Activated CD4-positive, alpha-beta T cell treated with anti-CD3 and anti-CD28 coated beads, Interleukin-2, amount 10 ng/mL, durations not matched to agents 24 days and 14 days (primary cell): ENCODE measurements at regions of chr18 and their contacts with region 1.

Region 1: DNA sequence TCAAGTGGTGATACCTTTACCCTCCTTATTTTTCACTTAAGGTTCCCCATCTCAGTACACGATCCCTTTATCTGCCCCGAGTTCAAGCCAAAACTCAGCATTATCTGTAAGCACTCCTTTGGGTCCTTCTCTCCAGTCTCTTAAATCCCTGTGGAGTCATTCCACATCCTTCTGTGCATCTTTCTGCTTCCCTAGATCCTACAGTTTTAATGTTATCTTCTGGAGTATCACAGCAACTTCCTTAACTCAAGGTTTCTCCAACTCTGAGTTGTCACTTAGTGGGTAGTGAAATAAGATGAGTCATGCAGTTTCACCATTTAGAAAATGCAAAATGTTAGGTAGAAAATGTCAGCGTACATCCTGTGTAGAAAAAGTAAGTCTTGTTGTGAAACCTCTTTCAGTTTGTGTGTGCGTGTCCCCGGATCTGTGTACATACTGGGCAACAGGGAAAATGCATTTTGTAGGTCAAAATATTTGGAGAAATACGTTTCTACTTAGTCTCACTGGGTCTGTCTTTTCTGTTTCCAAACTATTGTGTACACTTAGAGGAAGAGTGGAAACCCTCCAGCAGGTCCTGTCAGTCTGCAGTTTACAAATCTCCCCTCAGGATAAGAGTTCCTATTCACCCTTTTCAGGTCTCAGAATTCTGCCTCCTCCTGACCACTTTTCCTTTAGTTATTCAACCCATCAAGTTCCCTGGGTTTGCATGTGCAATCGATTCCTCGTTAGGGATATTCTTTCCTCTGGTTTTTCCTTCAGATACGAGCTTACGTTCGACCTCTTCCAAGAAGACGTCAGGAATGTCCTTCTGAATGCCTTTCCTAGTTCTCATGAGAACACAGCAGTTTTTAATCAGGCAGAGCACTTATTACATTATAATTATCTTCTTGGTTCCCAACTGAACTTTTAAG is 154.8 kb downstream of the TGIF1 start:
- DNase-seq: peak; percentile 82
- H3K4me3 Mint-ChIP-seq: no peak overlapping the region
- H3K27ac Mint-ChIP-seq: no peak overlapping the region
- H3K4me1 Mint-ChIP-seq: peaks cover 20% of the 10 kb centered on the region
- H3K27me3 Mint-ChIP-seq: no peaks in the 10 kb centered on the region

Region 2: GRCh38 chr18:2641638-2642037 is 963.1 kb before region 1 on chr18:
- intact Hi-C with region 1: loop called (anchors 10 kb)
- DNase-seq: peak; percentile 75
- H3K4me3 Mint-ChIP-seq: peak overlapping the region; percentile 70
- H3K27ac Mint-ChIP-seq: peak overlapping the region; percentile 87
- H3K4me1 Mint-ChIP-seq: peaks cover 43% of the 10 kb centered on the region
- H3K27me3 Mint-ChIP-seq: no peaks in the 10 kb centered on the region

Region 3: GRCh38 chr18:3151399-3152264 is 453.1 kb before region 1 on chr18:
- intact Hi-C with region 1: no loop called
- DNase-seq: peak; percentile 64
- H3K4me3 Mint-ChIP-seq: no peak overlapping the region
- H3K27ac Mint-ChIP-seq: no peak overlapping the region
- H3K4me1 Mint-ChIP-seq: peaks cover 6% of the 10 kb centered on the region
- H3K27me3 Mint-ChIP-seq: peaks cover 6% of the 10 kb centered on the region

Region 4: DNA sequence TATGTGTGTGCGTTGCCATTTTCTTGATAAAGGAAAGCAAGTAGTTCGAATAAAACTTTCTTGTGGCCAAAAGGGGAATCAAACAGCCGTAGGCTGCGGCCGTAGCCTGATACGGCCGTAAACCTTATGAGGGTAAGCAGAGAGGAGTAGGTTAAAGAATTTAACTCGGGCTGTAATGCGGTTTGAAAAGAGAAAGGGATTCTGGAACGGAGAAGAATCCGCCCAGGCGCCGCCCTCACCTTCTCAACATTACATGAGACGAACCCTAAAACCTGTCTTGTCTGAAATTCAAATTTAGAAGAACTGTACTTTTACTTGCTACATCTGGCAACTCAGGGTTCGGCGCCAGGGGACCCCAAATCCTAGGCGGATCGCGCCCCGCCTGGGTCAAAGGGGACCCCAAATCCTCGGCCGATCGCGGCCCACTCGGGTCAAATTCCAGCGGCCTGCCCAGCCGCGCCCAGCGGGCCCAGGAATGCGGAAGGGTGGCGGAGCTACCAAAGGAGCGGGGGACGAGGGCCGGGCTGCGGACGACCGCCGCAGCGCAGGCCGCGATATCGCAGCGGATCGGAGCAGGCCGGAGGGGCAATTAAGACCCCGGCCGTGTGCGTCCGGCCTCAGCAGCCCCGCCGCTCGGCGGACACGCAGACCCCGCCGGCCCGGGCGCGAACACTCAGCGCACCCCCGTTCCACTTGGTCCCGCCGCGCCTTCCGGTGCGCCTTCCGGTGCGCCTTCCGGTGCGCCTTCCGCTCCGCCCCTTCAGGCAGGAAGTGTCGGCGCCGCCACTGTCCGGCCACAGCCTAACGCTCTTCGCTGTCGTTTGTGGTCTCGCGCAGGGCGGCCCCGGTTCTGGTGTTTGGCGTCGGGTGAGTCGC is 343.1 kb before region 1 on chr18 and contains the start of gene MYL12B:
- intact Hi-C with region 1: loop called (anchors 2 kb)
- DNase-seq: peak; percentile 94
- H3K4me3 Mint-ChIP-seq: peak within 1 kb of the TSS; percentile 89
- H3K27ac Mint-ChIP-seq: peak within 1 kb of the TSS; percentile 98
- H3K4me1 Mint-ChIP-seq: peaks cover 68% of the 10 kb centered on the region
- H3K27me3 Mint-ChIP-seq: no peaks in the 10 kb centered on the region
- total RNA-seq, gene MYL12B: 239 and 245 TPM in 2 replicates

Region 5: DNA sequence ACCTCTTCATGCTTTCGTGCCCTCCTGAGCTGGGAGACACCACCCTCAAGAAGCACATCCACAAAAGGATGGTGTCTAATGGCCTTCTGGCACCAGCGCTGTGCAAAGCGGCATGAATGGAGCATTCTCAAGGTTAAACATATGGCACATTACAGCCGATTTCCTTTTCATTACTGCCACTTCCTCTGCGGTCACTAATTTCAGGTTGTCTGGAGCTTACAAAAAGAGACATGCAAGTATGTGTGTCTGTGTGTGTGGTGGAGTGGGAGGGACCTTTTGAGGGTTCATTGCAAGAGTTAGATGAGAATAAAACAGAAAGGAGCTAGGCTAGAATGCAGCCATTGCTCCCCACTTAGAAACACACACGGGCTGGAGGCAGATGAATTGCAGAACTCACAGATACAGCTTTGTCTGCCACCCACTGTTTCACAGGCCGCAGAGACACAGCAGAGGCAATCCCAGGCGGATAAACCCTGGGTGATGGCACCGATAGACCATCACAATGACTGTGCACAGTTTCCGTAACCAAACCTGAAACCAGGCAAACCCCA is 78.8 kb before region 1 on chr18:
- intact Hi-C with region 1: no loop called
- DNase-seq: peak; percentile 79
- H3K4me3 Mint-ChIP-seq: peak overlapping the region; percentile 19
- H3K27ac Mint-ChIP-seq: peak overlapping the region; percentile 1
- H3K4me1 Mint-ChIP-seq: peaks cover 13% of the 10 kb centered on the region
- H3K27me3 Mint-ChIP-seq: peaks cover 1% of the 10 kb centered on the region

Region 6: DNA sequence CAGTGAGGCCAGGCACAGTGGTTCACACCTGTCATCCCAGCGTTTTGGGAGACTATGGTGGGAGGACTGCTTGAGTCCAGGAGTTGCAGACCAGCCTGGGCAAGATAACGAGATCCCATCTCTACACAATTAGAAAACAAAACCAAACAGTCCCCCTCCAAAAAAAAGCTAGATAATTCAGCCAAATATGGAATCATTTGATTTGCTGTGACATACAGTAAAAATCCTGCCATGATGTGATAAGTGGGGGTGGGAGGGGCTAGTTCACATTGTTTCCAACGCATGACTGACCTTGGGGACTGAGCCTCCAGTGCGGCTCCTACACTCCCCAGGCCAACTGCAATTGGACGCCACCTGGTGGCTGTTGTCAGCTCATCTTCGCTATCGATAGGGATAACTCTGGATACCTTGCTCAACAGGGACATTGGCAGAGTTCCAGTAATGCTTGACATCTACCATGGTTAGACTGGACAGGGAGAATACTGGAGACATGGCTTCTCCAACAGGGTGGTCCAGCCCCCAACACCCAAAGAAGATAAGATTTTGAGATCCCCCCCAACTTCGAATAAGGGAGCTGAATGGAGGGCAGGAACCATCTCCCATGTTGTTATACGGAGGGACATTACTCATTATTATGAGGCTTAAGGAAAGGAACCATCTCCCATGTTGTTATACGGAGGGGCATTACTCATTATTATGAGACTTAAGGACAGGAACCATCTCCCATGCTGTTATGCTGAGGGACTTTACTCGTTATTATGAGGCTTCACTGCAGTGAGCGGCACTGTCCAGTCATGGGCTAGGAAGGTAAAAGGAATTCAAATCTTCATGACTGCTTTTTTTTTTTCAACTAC is 18.9 kb before region 1 on chr18:
- intact Hi-C with region 1: no loop called
- DNase-seq: peak; percentile 90
- H3K4me3 Mint-ChIP-seq: no peak overlapping the region
- H3K27ac Mint-ChIP-seq: peak overlapping the region; percentile 84
- H3K4me1 Mint-ChIP-seq: peaks cover 36% of the 10 kb centered on the region
- H3K27me3 Mint-ChIP-seq: no peaks in the 10 kb centered on the region

Region 7: GRCh38 chr18:3623769-3624545 is 19.2 kb after region 1 on chr18:
- intact Hi-C with region 1: loop called (anchors 1 kb)
- DNase-seq: peak; percentile 66
- H3K4me3 Mint-ChIP-seq: peak overlapping the region; percentile 72
- H3K27ac Mint-ChIP-seq: peak overlapping the region; percentile 91
- H3K4me1 Mint-ChIP-seq: peaks cover 37% of the 10 kb centered on the region
- H3K27me3 Mint-ChIP-seq: no peaks in the 10 kb centered on the region

Region 8: DNA sequence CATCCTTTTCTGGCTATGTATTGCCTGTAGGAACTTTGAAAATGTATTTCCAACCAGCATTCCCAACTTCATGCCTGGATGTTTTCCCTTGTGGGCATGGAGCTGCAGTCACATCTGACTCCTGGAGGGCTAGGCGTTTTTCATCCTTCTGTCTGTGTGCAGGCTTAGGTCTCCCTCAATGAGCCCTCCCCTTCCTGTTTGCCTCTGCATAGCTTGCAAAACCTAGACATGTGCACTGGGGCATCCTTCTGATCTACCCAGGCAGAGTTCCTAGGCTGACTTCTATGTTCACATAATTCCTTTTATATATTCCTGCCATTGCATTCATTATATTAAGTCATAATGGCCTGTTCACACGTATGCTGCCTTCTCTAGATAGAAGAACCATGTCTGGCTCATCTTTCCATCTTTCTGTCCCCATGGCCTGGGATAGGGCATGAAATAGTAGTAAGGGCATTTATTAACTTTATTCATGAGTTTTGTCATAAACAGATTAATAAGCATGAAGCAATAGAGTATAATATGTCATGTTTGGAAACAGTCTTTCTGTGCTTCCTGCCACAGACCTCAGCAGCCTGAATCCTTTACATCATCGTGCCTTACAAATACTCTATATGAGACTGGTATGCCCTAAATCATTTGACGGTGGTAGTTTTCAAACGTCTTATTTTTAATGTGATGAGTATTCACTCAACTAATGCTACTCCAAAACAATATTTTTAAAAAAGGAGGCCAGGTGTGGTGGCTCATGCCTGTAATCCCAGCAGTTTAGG is 40.8 kb after region 1 on chr18:
- intact Hi-C with region 1: loop called (anchors 1 kb)
- DNase-seq: no peak
- H3K4me3 Mint-ChIP-seq: no peak overlapping the region
- H3K27ac Mint-ChIP-seq: no peak overlapping the region
- H3K4me1 Mint-ChIP-seq: peaks cover 32% of the 10 kb centered on the region
- H3K27me3 Mint-ChIP-seq: no peaks in the 10 kb centered on the region

Region 9: GRCh38 chr18:3652380-3653262 is 47.9 kb after region 1 on chr18:
- intact Hi-C with region 1: loop called (anchors 1 kb)
- DNase-seq: peak; percentile 77
- H3K4me3 Mint-ChIP-seq: peak overlapping the region; percentile 54
- H3K27ac Mint-ChIP-seq: peak overlapping the region; percentile 92
- H3K4me1 Mint-ChIP-seq: peaks cover 41% of the 10 kb centered on the region
- H3K27me3 Mint-ChIP-seq: no peaks in the 10 kb centered on the region

Region 10: DNA sequence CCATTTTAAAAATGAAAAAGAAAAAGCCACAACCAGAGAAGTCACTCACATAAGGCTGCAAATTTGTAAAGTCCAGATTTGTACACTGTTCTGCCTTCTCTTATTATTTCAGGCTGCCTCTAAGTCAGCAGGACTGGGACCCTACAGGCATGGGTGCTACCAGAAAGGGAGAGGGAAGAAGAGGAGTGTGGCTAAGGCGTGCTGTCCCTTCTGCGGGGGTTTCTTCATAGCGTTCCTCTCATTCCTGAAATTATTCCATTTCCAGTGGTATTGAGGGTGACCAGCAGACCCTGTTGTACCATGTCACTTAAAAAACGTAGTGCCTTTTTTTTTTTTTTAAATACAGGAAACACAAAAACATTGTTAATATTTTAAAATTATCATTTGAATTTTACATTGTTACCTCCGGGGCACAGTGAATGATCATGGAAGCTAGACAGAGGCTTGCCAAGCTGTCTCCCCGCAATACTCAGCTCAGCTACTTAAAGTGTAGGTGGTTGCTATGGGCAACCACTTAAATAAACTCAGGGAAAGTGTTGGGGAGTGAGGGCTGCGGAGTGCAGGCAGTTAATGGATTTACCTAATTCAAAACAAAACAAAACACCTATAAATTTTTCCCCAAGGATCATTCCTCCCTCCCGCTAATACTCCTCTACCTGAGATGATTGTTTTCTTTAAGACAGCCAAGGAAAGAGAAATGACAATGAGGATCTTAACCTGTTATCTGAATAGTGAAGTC is 194.6 kb after region 1 on chr18:
- intact Hi-C with region 1: no loop called
- DNase-seq: no peak
- H3K4me3 Mint-ChIP-seq: no peak overlapping the region
- H3K27ac Mint-ChIP-seq: no peak overlapping the region
- H3K4me1 Mint-ChIP-seq: peaks cover under 1% of the 10 kb centered on the region
- H3K27me3 Mint-ChIP-seq: peaks cover 2% of the 10 kb centered on the region